H1 (cell line): ENCODE measurements at regions of chr18 and their contacts with region 1.

Region 1: GRCh38 chr18:46213295-46213694 is 109.1 kb downstream of the HAUS1 start:
- DNase-seq: no peak
- H3K4me3 ChIP-seq: no peak overlapping the region
- H3K27ac ChIP-seq: no peak overlapping the region
- H3K4me1 ChIP-seq: no peaks in the 10 kb centered on the region
- H3K27me3 ChIP-seq: no peaks in the 10 kb centered on the region
- CTCF ChIP-seq: peak in 2 of 3 experiments; percentile 17 to 42; a peak in 2 of 4 replicates
- EP300 ChIP-seq: no peak
- POLR2A ChIP-seq: no peak
- RAD21 ChIP-seq: peak; percentile 34 to 42; a peak in 3 of 4 replicates

Region 2: GRCh38 chr18:46051731-46052461 is 161.4 kb before region 1 on chr18:
- CTCF ChIA-PET with region 1: no interaction called
- POLR2A ChIA-PET with region 1: no interaction called
- DNase-seq: peak in 1 of 2 experiments; percentile 37
- H3K4me3 ChIP-seq: no peak overlapping the region
- H3K27ac ChIP-seq: no peak overlapping the region
- H3K4me1 ChIP-seq: no peaks in the 10 kb centered on the region
- H3K27me3 ChIP-seq: no peaks in the 10 kb centered on the region
- CTCF ChIP-seq: no peak
- EP300 ChIP-seq: no peak
- POLR2A ChIP-seq: no peak
- RAD21 ChIP-seq: no peak

Region 3: DNA sequence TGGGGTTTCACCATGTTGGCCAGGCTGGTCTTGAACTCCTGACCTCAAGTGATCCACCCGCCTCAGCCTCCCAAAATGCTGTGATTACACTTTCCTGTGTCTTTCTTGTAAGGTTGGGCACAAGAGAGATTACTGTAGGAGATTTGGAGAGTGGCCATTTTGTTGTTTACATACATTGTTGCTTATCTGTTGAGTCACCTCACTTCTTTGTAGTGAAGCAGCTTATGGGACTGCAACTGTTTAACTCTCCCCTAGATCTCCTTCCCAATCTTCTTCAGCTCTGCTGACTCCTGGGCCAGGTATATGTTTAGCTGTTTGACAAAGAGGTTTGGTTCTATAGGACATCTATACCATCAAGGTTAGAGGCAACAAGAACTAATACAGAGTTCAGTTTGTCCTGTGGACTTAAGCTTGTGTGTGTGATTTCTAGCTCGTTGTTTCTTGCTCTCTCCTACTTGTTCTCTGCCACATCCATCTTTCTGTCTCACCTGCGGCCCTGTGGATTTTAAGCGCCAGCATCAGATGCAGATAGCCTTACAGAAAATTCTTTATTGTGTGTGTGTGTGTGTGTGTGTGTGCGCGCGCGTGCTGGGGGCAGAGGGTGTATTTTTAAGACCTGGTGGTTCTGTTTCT is 13.7 kb before region 1 on chr18:
- CTCF ChIA-PET with region 1: interaction called, 12 read pairs
- POLR2A ChIA-PET with region 1: no interaction called
- DNase-seq: no peak
- H3K4me3 ChIP-seq: no peak overlapping the region
- H3K27ac ChIP-seq: 0 out of 2 replicates have a peak overlapping the region, but pooled peaks have one; percentile 47
- H3K4me1 ChIP-seq: no peaks in the 10 kb centered on the region; a peak in 1 of 7 replicates
- H3K27me3 ChIP-seq: no peaks in the 10 kb centered on the region
- CTCF ChIP-seq: no peak
- EP300 ChIP-seq: no peak
- POLR2A ChIP-seq: no peak
- RAD21 ChIP-seq: no peak

Region 4: DNA sequence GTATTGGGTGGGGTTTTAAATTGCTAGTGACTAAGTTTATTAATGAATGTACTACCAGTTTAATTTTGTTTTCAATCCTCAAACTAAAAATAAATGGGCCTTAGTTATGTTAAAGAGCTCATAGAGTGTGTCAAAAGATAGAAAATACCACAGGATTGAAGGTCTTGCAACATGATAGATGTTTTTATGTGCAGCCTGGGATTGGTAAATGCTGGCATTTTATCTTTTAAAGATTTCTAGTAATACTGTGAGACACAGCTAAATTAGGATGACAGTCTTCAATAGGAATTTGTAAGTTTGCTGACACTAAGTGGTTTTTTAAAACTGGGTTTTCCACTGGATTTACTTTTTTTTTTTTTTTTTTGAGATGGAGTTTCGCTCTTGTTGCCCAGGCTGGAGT is 13.2 kb after region 1 on chr18:
- CTCF ChIA-PET with region 1: interaction called, 18 read pairs
- POLR2A ChIA-PET with region 1: no interaction called
- DNase-seq: no peak
- H3K4me3 ChIP-seq: no peak overlapping the region
- H3K27ac ChIP-seq: no peak overlapping the region
- H3K4me1 ChIP-seq: no peaks in the 10 kb centered on the region; a peak in 1 of 7 replicates
- H3K27me3 ChIP-seq: no peaks in the 10 kb centered on the region
- CTCF ChIP-seq: no peak
- EP300 ChIP-seq: no peak
- POLR2A ChIP-seq: no peak
- RAD21 ChIP-seq: no peak